Activated CD4-positive, alpha-beta memory T cell treated with anti-CD3 and anti-CD28 coated beads, Interleukin-2, amount 10 ng/mL, durations not matched to agents 7 days and 5 days (primary cell): ENCODE measurements at regions of chr17 and their contacts with region 1.

Region 1: DNA sequence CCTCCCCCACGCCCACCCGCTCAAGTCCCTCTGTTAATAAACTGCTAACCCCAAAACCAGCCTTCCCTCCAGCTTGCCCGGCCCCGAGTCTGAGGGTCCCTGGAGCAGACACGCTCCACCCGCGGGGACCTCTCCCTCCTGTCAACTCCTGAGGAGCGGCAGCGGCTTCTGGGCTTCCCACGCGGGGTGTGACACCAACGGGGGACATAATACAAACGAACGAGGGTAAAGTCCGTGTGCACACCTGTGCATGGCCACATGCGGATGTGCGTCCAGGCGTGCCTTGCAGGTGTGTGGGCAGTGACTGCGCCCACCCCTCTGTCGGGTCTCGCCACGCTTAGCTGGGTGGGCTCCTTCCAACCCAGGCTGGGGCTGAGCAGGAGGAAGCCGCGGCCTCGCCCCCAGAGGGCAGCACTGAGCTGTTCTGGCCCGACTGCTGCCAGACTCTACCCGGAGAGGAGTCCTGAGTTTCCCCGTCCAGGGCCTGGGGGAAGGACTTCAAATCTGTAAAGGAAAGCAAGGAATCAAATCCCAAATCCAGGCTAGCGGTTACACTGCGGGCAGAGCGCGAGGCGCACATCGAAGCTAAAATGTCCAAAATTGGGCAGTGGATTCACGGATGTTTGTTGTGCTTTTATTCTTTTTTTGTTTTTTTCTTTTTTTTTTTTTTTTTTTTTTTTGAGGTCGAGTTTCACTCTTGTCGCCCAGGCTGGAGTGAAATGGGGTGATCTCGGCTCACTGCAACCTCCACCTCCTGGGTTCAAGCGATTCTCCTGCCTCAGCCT is 24.2 kb upstream of the KRT17 start:
- DNase-seq: peak; percentile 85
- H3K4me3 Mint-ChIP-seq: peak overlapping the region; percentile 52
- H3K27ac Mint-ChIP-seq: peak overlapping the region; percentile 9
- H3K4me1 Mint-ChIP-seq: peaks cover 11% of the 10 kb centered on the region
- H3K27me3 Mint-ChIP-seq: peaks cover 8% of the 10 kb centered on the region

Region 2: DNA sequence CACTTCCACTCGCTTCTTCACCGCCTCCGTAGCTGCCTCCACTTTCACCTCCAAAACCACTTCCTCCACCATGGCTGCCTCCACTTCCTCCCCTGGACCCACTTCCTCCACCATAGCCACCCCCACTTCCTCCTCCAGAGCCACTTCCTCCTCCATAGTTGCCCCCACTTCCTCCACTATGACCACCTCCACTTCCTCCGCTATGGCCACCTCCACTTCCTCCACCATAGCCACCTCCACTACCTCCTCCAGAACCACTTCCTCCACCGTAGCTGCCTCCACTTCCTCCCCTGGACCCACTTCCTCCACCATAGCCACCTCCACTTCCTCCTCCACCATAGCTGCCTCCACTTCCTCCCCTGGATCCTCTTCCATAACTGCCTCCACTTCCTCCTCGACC is 81.3 kb before region 1 on chr17:
- CTCF ChIA-PET with region 1: interaction called, 13 read pairs
- POLR2A ChIA-PET with region 1: no interaction called
- DNase-seq: no peak
- H3K4me3 Mint-ChIP-seq: no peak overlapping the region
- H3K27ac Mint-ChIP-seq: peak overlapping the region; percentile 75
- H3K4me1 Mint-ChIP-seq: peaks cover 6% of the 10 kb centered on the region
- H3K27me3 Mint-ChIP-seq: peaks cover 39% of the 10 kb centered on the region

Region 3: DNA sequence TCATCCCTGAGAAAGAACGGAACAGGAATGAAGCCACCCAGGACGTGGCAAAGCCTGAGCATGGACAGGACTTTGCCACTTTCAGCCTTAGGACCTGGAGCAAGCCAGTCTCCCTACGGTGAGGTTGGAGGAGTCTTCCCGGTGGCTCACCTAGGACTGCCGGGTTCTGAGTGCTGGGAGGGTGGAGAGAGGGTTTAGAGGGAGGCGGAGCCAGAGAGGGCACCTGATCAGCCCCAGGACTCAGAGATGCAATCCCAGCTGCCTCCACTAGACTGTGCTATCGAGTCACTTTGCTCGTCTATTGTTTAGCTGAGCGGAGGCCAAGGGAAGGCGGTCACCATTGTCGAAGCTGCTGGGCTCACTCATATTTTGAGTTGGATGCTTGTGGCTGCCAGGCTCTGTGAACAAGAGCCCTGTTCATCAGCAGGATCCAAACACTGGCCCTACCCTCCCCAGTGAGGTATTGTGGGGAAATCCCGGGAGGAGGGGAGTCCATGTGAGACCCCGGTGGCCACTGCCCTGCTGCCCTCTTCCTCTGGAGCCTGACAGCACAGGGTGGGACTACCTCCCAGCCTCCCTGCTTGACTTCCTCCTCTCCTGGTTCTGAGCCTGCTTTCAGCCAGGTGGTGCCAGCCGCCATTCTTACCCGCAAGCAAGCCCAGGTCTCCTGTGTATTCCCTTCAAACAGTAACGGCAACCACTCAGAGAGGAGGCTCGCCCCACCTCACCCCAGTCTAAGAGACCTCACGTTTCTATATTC is 68.9 kb before region 1 on chr17:
- CTCF ChIA-PET with region 1: interaction called, 15 read pairs
- POLR2A ChIA-PET with region 1: no interaction called
- DNase-seq: peak; percentile 82
- H3K4me3 Mint-ChIP-seq: no peak overlapping the region
- H3K27ac Mint-ChIP-seq: no peak overlapping the region
- H3K4me1 Mint-ChIP-seq: no peaks in the 10 kb centered on the region
- H3K27me3 Mint-ChIP-seq: peaks cover 26% of the 10 kb centered on the region

Region 4: GRCh38 chr17:41678907-41679739 is 30.5 kb after region 1 on chr17:
- CTCF ChIA-PET with region 1: interaction called, 13 read pairs
- POLR2A ChIA-PET with region 1: no interaction called
- DNase-seq: peak; percentile 84
- H3K4me3 Mint-ChIP-seq: peak overlapping the region; percentile 87
- H3K27ac Mint-ChIP-seq: peak overlapping the region; percentile 95
- H3K4me1 Mint-ChIP-seq: peaks cover 65% of the 10 kb centered on the region
- H3K27me3 Mint-ChIP-seq: no peaks in the 10 kb centered on the region

Region 5: DNA sequence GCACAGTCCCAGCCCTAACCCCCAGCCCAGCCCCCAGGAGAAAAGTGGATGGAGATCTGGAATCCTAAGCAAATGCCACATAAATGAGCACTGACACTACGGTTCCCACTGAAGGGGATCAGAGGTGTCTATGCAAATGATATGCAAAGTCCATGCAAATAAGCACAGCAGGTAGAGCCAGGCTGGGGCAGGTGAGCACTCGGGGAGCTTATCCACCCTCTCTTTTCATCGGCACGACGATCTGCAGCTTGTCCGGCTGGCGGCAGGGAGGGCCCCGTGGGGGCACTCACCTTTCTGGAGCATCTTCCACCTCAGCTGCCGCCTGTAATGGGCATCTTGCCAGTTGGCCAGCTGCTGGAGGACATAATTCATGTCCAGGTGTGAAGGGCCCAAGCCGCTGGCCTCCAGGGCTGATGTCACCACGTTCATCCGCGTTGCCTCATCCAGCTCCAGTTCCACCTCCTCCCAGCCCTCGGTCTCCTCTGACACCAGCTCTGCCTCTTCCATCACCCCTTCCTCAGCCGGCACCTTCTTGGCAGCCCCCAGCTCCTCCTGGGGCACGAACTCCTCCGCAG is 76.0 kb after region 1 on chr17:
- CTCF ChIA-PET with region 1: no interaction called
- POLR2A ChIA-PET with region 1: no interaction called
- DNase-seq: no peak
- H3K4me3 Mint-ChIP-seq: no peak overlapping the region
- H3K27ac Mint-ChIP-seq: no peak overlapping the region
- H3K4me1 Mint-ChIP-seq: no peaks in the 10 kb centered on the region
- H3K27me3 Mint-ChIP-seq: peaks cover 4% of the 10 kb centered on the region

Region 6: DNA sequence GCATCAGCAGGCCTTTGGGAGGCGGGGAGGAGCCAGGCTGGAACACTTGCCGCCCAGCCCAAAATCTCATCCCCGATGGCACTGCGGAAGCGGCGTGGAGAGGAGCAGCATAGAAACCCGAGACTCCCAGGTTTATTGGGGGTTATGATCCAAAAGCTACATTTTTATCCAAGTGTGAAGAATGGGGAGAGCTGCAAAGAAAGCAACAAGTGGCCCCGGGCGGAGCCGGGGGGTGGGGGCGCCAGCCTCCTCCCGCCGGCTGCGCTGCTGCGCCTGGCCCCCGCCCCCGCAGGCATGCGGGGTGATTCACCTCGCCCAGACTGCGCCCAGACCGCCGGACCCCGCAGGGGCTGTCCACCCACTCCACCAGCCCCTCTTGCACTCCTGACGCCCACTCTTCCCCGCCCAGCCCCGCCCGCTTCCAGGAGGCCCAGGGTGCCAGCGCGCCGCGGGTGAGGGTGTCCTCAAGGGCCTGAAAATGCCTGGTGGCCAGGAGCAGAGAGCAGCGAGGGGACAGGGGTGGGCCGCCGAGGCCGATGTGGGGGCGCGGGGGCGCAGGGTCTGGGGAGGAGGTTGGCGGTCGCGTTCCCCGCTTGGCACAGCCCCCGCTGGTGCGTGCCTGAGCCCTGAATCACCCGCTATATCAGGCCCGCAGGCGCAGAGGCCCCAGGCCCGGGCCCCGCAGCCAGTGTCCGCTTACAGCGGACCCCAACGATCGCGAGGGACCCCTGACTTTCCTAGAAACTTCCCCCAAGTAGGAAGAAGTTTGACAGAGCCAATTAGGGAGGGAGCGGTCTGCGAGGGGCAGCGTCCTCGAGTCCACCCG is 773.1 kb after region 1 on chr17:
- CTCF ChIA-PET with region 1: no interaction called
- POLR2A ChIA-PET with region 1: no interaction called
- DNase-seq: no peak
- H3K4me3 Mint-ChIP-seq: peak overlapping the region; percentile 41
- H3K27ac Mint-ChIP-seq: no peak overlapping the region
- H3K4me1 Mint-ChIP-seq: peaks cover 22% of the 10 kb centered on the region
- H3K27me3 Mint-ChIP-seq: peaks cover 49% of the 10 kb centered on the region